ENCODE measurements at regions of chr9 and their contacts with region 1.

Region 1: DNA sequence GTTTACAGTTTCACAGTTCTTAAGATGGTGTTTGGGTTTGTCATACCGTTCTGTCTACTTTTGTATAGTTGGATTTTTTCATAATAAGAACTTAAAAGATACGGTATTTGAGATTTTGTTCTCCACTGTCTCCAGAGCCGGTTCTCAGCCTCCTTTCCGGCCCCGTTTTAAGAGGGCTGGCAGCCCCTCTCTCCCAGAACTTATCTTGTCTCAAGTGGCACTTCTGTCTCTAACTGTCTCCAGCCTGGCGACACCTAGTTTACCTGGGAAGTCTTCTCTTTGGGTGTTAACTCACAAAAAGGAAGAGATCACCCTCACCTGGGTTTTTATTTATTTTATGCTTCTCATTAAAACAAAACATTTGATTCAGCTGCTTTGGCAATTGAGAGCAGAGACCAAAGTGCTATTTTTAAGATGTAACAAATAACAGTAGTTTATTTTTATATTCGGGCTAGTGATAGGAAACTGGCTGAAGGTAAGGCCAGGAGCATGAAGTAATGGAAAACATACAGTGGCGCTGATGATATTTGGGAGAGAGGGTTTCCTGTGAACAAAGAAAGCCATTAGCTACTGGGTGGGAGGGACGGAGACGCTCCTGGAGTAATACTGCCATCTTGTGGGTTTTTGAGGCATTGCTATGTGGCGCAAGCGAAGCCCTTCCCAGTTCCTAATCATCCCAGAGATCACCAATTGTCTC is 48.3 kb downstream of the ACER2 start:
- DNase-seq: peak in 4 of 5 donors; percentile 52 to 74 (median 62)
- ATAC-seq: peak; percentile 95 to 97 (median 96)
- H3K4me3 ChIP-seq: peak overlapping the region in 9 of 12 donors; percentile 8 to 42 (median 38)
- H3K27ac ChIP-seq: peak overlapping the region; percentile 24 to 82 (median 68)
- H3K4me1 ChIP-seq: peaks cover 0 to 18% (median 10%) of the 10 kb centered on the region in 12 donors
- H3K27me3 ChIP-seq: no peaks in the 10 kb centered on the region
- CTCF ChIP-seq: peak in 11 of 12 donors; percentile 93 to 99 (median 97)
- POLR2A ChIP-seq: no peak

Region 2: DNA sequence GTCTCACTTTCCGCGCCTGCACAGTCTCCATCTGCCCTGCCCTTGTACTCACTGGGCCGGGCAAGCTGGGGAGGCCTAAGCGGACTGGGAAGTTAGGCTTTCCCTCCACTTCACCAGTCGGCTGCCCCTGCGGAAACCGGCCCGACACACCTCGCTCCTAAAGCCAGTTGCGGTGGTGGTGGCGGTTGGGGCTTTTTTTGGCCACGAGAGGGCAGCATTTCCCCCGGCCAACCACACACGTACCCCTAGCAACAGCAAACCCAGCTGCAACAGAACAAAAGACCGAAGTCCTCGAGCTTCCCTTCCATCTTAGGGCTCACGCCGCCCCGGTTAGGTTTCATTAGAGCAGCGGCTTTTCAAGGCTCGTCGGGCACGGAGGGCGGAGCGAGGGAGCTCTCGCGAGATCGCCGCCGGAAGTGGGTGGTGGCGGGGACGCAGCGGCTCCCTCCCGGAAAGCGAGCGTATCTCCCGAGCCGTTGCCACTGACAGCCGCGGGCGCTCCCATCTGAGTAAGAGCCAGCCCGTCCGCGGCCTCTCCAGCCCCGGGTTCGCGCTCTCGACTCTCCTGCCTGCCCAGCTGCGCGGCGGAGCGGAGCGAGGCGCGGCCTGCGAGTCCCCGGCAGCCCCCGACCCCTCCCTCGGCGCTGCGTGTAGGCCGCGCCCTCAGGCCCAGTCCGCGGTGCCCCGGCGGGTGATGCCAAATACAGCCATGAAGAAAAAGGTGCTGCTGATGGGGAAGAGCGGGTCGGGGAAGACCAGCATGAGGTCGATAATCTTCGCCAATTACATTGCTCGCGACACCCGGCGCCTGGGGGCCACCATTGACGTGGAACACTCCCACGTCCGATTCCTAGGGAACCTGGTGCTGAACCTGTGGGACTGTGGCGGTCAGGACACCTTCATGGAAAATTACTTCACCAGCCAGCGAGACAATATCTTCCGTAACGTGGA is 407.9 kb before region 1 on chr9 and contains the start of gene RRAGA:
- intact Hi-C with region 1: loop called in 7 of 10 experiments (anchors 1 to 10 kb)
- DNase-seq: peak; percentile 94 to 97 (median 94)
- ATAC-seq: peak; percentile 94 to 97 (median 97)
- H3K4me3 ChIP-seq: peak within 1 kb of the TSS; percentile 71 to 98 (median 88)
- H3K27ac ChIP-seq: peak within 1 kb of the TSS; percentile 84 to 99 (median 97)
- H3K4me1 ChIP-seq: peaks cover 0 to 46% (median 30%) of the 10 kb centered on the region in 12 donors
- H3K27me3 ChIP-seq: no peaks in the 10 kb centered on the region
- CTCF ChIP-seq: peak; percentile 74 to 95 (median 87)
- POLR2A ChIP-seq: peak in 1 of 2 donors; percentile 86
- total RNA-seq, gene RRAGA: 60.1 to 93.3 (median 83.6) TPM

Region 3: DNA sequence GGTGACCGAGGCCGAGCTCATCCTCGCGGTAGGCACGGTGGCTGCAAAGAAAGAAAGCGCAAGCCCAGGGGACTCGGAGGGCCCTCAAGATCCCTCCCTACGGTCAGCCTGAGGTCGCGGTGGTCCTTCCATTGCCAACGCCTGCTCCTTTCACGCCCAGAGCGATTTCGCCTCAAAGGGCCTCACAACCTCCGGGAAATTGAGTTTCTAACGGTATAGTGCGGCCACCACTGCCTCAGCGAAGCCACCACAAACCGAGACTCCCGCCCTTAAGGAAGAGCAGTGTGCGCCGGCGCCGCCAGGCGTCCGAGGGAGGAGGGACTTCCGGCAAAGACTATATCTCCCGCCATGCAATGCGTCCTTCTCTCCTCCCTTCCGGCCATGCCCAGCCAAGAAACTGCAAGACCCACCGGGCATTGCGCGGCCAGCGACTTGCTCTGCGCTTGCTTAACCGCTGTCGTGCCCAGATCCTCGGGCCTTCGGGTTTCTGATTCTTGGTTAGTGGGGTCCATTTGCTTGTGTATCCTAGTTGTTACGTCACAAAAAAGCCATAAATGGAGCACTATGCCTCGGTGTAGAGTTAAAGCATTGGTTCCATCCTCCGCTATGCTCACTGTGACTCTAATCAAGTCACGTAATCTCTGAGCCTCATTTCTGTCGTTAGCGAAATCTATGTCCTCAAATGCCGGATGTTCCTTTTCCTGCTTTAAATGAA is 354.4 kb before region 1 on chr9 and contains the start of gene HAUS6:
- intact Hi-C with region 1: loop called in 3 of 10 experiments (anchors 1 to 5 kb)
- DNase-seq: peak; percentile 97 to 98 (median 98)
- ATAC-seq: peak; percentile 100
- H3K4me3 ChIP-seq: peak within 1 kb of the TSS; percentile 56 to 92 (median 77)
- H3K27ac ChIP-seq: peak within 1 kb of the TSS; percentile 61 to 92 (median 88)
- H3K4me1 ChIP-seq: peaks cover 0 to 24% (median 11%) of the 10 kb centered on the region in 12 donors
- H3K27me3 ChIP-seq: no peaks in the 10 kb centered on the region
- CTCF ChIP-seq: peak; percentile 34 to 65 (median 47)
- POLR2A ChIP-seq: peak in 1 of 2 donors; percentile 64
- total RNA-seq, gene HAUS6: 4.6 to 8.8 (median 7.3) TPM

Region 4: DNA sequence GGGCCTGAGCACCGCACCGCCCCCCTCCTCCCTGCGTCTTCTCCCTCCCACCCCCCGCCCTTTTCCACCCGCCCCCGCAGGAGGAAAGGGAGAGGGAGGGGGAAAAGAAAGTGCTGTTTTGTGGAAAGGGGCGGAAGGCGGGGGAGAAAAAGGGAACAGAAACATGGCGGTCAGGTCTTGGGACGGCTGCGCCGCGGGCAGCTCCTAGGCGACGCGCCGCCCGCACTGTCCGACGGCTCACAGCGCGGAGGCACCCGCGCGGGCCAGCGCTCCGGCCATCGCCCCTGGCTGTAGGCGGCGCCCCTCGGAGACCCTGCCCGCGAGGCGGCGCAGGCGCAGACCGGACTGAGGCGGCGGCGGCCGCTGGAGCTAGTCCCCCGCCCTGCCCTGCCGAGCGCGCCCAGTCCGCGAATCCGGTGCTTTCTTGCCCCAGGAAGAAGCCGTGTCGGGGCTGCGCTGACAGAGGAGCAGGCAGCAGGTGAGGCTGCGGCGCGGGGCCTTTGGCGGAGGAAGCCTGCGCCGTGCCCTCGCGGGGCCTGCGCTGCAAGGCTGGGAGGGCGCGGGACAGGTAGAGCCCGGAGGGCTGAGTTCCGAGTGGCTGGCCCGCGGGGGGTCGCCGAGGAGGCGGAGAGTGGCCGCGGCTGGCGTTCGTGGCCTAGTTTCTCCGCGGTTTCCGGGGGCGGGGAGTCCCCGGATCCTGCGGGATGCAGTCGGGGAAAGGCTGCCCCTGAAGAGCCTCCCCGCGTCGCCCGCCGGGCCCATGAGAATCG is 226.6 kb before region 1 on chr9 and contains the start of gene DENND4C:
- intact Hi-C with region 1: loop called in 2 of 10 experiments (anchors 2 to 5 kb)
- DNase-seq: peak; percentile 88 to 95 (median 90)
- ATAC-seq: peak; percentile 74 to 96 (median 90)
- H3K4me3 ChIP-seq: peak within 1 kb of the TSS; percentile 84 to 100 (median 97)
- H3K27ac ChIP-seq: peak within 1 kb of the TSS; percentile 95 to 100 (median 99)
- H3K4me1 ChIP-seq: peaks cover 0 to 31% (median 22%) of the 10 kb centered on the region in 12 donors
- H3K27me3 ChIP-seq: no peaks in the 10 kb centered on the region
- CTCF ChIP-seq: peak in 5 of 12 donors; percentile 19 to 42 (median 28)
- POLR2A ChIP-seq: peak in 1 of 2 donors; percentile 83
- total RNA-seq, gene DENND4C: 19.4 to 36.9 (median 24.5) TPM

Region 5: DNA sequence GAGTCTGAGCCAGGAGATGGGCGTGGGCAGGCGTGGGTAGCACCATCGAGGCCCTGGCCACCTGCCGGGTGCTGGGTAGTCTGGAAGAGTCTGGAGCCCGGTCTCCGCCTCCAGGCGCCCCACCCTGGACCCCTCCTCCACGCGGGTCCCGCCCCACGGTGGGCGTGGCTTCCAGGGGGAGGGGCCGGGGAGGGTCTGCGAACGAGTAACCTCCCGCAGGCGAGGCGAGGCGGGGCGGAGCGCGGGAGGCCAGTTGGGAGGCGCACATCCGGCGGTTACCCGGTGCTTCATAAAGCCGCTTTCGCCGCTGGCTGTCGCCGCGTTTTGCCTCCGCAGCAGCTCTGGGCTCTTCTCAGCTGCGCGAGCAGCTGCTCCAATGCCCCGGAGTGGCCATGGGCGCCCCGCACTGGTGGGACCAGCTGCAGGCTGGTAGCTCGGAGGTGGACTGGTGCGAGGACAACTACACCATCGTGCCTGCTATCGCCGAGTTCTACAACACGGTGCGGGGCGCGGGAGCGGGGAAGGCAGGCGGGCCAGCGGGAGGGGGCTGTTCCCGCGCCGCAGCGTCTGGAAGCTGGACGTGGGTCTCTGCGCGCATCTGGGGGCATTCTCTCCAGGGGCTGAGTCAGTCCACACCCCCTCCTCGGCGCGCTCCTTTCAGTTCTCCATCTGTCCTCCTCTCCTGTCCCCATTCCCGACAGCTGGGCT is 48.3 kb before region 1 on chr9 and contains the start of gene ACER2:
- intact Hi-C with region 1: loop called in 2 of 10 experiments (anchors 2 kb)
- DNase-seq: peak; percentile 96 to 99 (median 97)
- ATAC-seq: peak; percentile 97 to 99 (median 98)
- H3K4me3 ChIP-seq: peak within 1 kb of the TSS; percentile 65 to 98 (median 89)
- H3K27ac ChIP-seq: peak within 1 kb of the TSS; percentile 83 to 96 (median 88)
- H3K4me1 ChIP-seq: peaks cover 0 to 26% (median 22%) of the 10 kb centered on the region in 12 donors
- H3K27me3 ChIP-seq: no peaks in the 10 kb centered on the region
- CTCF ChIP-seq: peak in 4 of 12 donors; percentile 8 to 22 (median 13)
- POLR2A ChIP-seq: peak; percentile 70 to 96
- total RNA-seq, gene ACER2: 1.6 to 4.5 (median 3.9) TPM